ENCODE measurements at regions of chr10 and their contacts with region 1.

Region 1: GRCh38 chr10:110547139-110547761 is 20.2 kb upstream of the SMC3 start:
- DNase-seq: no peak
- H3K4me3 Mint-ChIP-seq: no peak overlapping the region
- H3K27ac Mint-ChIP-seq: no peak overlapping the region
- H3K4me1 Mint-ChIP-seq: peaks cover 6% of the 10 kb centered on the region
- H3K27me3 Mint-ChIP-seq: peaks cover 19% of the 10 kb centered on the region

Region 2: DNA sequence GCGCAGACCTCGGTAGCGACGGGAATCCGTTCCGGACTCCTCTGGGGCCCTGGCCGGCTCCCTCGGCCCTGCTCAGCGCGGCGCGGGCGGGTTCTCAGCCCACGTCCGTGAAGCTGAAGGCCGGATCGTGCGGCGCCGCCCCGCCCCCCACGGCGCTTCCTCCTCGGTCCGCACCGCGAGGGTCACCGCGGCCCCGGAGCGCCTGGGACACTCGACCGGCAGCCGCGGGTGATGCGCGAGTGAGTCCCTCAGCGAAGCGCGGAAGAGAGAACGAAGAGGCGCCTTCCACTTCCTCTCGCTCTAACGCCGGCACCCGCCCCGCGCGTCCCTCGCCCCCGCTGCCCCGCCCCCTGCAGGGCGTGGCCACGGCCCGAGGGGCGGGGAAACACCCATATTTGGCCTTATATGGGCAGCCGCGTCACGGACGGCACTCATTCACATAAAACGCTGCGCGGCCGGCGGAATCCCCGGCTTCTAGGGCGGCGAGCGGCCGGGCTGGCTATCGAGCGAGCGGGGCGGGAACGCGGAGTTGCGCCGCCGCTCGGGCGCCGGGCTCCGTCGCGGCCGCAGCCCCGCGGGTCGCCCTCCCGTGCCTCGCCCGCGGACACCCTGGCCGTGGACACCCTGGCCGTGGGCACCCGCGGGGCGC is 49.7 kb before region 1 on chr10 and contains the start of gene DUSP5:
- CTCF ChIA-PET with region 1: interaction called, 21 read pairs
- intact Hi-C with region 1: loop called (anchors 1 kb)
- DNase-seq: peak; percentile 94
- H3K4me3 Mint-ChIP-seq: peak within 1 kb of the TSS; percentile 97
- H3K27ac Mint-ChIP-seq: peak within 1 kb of the TSS; percentile 94
- H3K4me1 Mint-ChIP-seq: peaks cover 43% of the 10 kb centered on the region
- H3K27me3 Mint-ChIP-seq: no peaks in the 10 kb centered on the region
- total RNA-seq, gene DUSP5: 51.0 to 53.5 TPM

Region 3: GRCh38 chr10:110502851-110503301 is 44.4 kb before region 1 on chr10:
- CTCF ChIA-PET with region 1: interaction called, 21 read pairs
- intact Hi-C with region 1: loop called (anchors 1 kb)
- DNase-seq: peak; percentile 66
- H3K4me3 Mint-ChIP-seq: peak overlapping the region; percentile 97
- H3K27ac Mint-ChIP-seq: peak overlapping the region; percentile 85
- H3K4me1 Mint-ChIP-seq: peaks cover 74% of the 10 kb centered on the region
- H3K27me3 Mint-ChIP-seq: no peaks in the 10 kb centered on the region

Region 4: GRCh38 chr10:110512461-110513187 is 34.6 kb before region 1 on chr10:
- CTCF ChIA-PET with region 1: interaction called, 15 read pairs
- intact Hi-C with region 1: no loop called
- DNase-seq: peak; percentile 86
- H3K4me3 Mint-ChIP-seq: no peak overlapping the region
- H3K27ac Mint-ChIP-seq: peak overlapping the region; percentile 80
- H3K4me1 Mint-ChIP-seq: peaks cover 51% of the 10 kb centered on the region
- H3K27me3 Mint-ChIP-seq: no peaks in the 10 kb centered on the region

Region 5: GRCh38 chr10:110535958-110536891 is 11.0 kb before region 1 on chr10:
- CTCF ChIA-PET with region 1: interaction called, 7 read pairs
- intact Hi-C with region 1: loop called (anchors 1 kb)
- DNase-seq: peak; percentile 90
- H3K4me3 Mint-ChIP-seq: no peak overlapping the region
- H3K27ac Mint-ChIP-seq: peak overlapping the region; percentile 54
- H3K4me1 Mint-ChIP-seq: peaks cover 22% of the 10 kb centered on the region
- H3K27me3 Mint-ChIP-seq: no peaks in the 10 kb centered on the region

Region 6: GRCh38 chr10:110597476-110597875 is 50.2 kb after region 1 on chr10:
- CTCF ChIA-PET with region 1: no interaction called
- intact Hi-C with region 1: no loop called
- DNase-seq: no peak
- H3K4me3 Mint-ChIP-seq: no peak overlapping the region
- H3K27ac Mint-ChIP-seq: no peak overlapping the region
- H3K4me1 Mint-ChIP-seq: peaks cover 2% of the 10 kb centered on the region
- H3K27me3 Mint-ChIP-seq: no peaks in the 10 kb centered on the region

Measured in activated naive CD4-positive, alpha-beta T cell treated with anti-CD3 and anti-CD28 coated beads for 36 hours (primary cell).